ENCODE measurements at regions of chr14 and their contacts with region 1.

Region 1: GRCh38 chr14:63727774-63728728 is at the start of gene SGPP1:
- DNase-seq: peak; percentile 29 to 66
- ATAC-seq: peak; percentile 87 to 91
- H3K4me3 ChIP-seq: peak within 1 kb of the TSS; percentile 83 to 92 (median 88)
- H3K27ac ChIP-seq: peak within 1 kb of the TSS; percentile 82 to 90 (median 86)
- H3K4me1 ChIP-seq: peaks cover 17 to 18% of the 10 kb centered on the region in 2 donors
- H3K27me3 ChIP-seq: no peaks in the 10 kb centered on the region
- CTCF ChIP-seq: peak in 2 of 5 experiments; percentile 36 to 43
- POLR2A ChIP-seq: peak; percentile 64 to 66
- total RNA-seq, gene SGPP1: 3.5 to 11.3 (median 8.1) TPM

Region 2: GRCh38 chr14:63650256-63650952 is 77.6 kb before region 1 on chr14:
- in situ Hi-C with region 1: no loop called
- intact Hi-C with region 1: no loop called
- DNase-seq: no peak
- ATAC-seq: no peak
- H3K4me3 ChIP-seq: no peak overlapping the region
- H3K27ac ChIP-seq: no peak overlapping the region
- H3K4me1 ChIP-seq: no peaks in the 10 kb centered on the region
- H3K27me3 ChIP-seq: no peaks in the 10 kb centered on the region
- CTCF ChIP-seq: no peak
- POLR2A ChIP-seq: no peak

Region 3: GRCh38 chr14:63759456-63759855 is 31.4 kb after region 1 on chr14:
- in situ Hi-C with region 1: no loop called
- intact Hi-C with region 1: no loop called
- DNase-seq: no peak
- ATAC-seq: no peak
- H3K4me3 ChIP-seq: no peak overlapping the region
- H3K27ac ChIP-seq: no peak overlapping the region
- H3K4me1 ChIP-seq: no peaks in the 10 kb centered on the region
- H3K27me3 ChIP-seq: no peaks in the 10 kb centered on the region
- CTCF ChIP-seq: no peak
- POLR2A ChIP-seq: no peak

Region 4: DNA sequence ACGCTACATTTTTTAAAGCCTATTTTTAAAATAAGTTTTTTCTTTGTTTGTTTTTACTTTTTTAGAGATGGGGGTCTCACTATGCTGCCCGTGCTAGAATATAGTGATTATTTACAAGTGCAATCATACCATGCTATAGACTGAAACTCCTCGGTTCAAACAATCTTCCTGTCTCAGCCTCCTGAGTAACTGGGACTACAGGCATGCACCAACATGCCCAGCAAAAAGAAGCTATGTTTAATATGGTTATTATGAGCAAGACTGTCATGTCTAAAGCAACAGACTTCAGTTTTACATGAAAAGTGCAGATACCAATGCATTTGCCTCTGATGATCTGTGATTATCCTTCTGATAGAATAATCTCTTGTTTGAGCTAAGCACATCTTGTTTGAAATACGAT is 45.5 kb after region 1 on chr14:
- in situ Hi-C with region 1: no loop called
- intact Hi-C with region 1: loop called (anchors 1 kb)
- DNase-seq: no peak
- ATAC-seq: no peak
- H3K4me3 ChIP-seq: no peak overlapping the region
- H3K27ac ChIP-seq: no peak overlapping the region
- H3K4me1 ChIP-seq: no peaks in the 10 kb centered on the region
- H3K27me3 ChIP-seq: no peaks in the 10 kb centered on the region
- CTCF ChIP-seq: no peak
- POLR2A ChIP-seq: no peak